MCF 10A (cell line): ENCODE measurements at regions of chr9 and their contacts with region 1.

Region 1: DNA sequence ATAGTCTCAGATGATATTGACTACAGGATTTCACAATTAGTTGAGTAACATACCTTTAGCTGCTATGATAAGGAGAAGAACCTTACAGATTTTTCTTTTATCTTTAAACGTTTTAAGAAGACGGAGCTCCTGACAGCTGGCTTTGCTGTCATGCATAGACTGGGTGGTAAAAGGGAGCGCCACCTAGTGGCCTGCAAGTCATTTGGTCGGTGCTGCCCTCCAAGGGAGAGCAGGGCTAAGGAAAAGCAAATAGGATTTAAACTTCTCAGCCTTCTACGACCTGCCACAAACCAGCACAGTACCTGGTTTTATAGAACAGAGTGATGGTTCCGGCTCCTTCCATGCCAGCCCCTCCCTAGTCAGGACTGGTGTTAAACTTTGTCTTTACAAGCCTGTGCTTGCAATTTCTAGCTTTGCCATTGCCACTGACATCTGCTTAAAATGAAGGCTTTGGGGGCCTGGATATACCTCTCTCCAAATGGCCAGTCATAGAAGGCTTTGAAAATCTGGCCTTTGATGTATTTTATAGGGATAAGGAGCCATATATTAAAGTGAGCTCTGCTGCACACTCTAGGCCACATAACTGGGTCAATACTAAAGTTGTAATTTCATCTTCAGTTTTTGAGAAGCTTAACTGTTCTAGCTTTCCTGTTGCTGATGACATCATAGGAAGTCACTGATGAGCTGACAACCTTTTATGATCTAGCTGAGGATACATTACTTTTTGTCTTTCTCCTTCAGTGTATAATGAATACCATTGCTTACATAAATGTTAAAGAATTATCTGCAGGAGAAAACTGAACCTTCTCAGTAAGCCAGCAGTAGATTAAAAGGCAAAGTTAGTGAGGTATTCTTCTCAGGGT is 31.1 kb upstream of the ADAMTSL1 start:
- DNase-seq: peak; percentile 80
- H3K4me3 Mint-ChIP-seq: no peak overlapping the region
- H3K27ac Mint-ChIP-seq: no peak overlapping the region
- H3K4me1 Mint-ChIP-seq: peaks cover 7% of the 10 kb centered on the region
- H3K27me3 Mint-ChIP-seq: no peaks in the 10 kb centered on the region
- CTCF ChIP-seq: peak; percentile 72

Region 2: GRCh38 chr9:18154661-18155060 is 288.2 kb before region 1 on chr9:
- CTCF ChIA-PET with region 1: no interaction called
- POLR2A ChIA-PET with region 1: no interaction called
- intact Hi-C with region 1: no loop called
- DNase-seq: no peak
- H3K4me3 Mint-ChIP-seq: no peak overlapping the region
- H3K27ac Mint-ChIP-seq: no peak overlapping the region
- H3K4me1 Mint-ChIP-seq: no peaks in the 10 kb centered on the region
- H3K27me3 Mint-ChIP-seq: peaks cover 65% of the 10 kb centered on the region
- CTCF ChIP-seq: no peak

Region 3: GRCh38 chr9:18260521-18260920 is 182.3 kb before region 1 on chr9:
- CTCF ChIA-PET with region 1: interaction called, 126 read pairs
- POLR2A ChIA-PET with region 1: interaction called, 4 read pairs
- intact Hi-C with region 1: loop called (anchors 1 kb)
- DNase-seq: peak; percentile 53
- H3K4me3 Mint-ChIP-seq: no peak overlapping the region
- H3K27ac Mint-ChIP-seq: no peak overlapping the region
- H3K4me1 Mint-ChIP-seq: peaks cover 20% of the 10 kb centered on the region
- H3K27me3 Mint-ChIP-seq: no peaks in the 10 kb centered on the region
- CTCF ChIP-seq: no peak

Region 4: DNA sequence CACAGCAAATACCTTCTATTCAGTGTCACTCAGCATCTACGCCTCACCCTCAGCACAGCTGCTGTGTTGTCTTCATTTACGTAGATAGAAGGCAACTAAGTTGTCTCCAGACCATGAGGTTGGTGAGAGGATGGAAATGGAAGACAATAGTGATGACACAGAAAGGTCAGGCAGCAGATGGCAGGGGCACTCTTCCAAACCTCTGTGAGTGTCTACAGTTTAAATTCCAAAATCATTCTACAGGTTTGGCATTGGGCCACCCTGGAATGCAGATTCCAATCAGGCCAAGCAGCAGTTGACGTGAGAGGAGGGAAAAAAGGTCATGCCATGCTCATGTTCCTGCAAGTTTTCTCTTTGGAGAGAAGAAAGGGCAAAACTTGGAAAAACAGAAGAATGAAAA is 37.6 kb before region 1 on chr9:
- CTCF ChIA-PET with region 1: interaction called, 12 read pairs
- POLR2A ChIA-PET with region 1: no interaction called
- intact Hi-C with region 1: no loop called
- DNase-seq: peak; percentile 61
- H3K4me3 Mint-ChIP-seq: no peak overlapping the region
- H3K27ac Mint-ChIP-seq: no peak overlapping the region
- H3K4me1 Mint-ChIP-seq: peaks cover 15% of the 10 kb centered on the region
- H3K27me3 Mint-ChIP-seq: no peaks in the 10 kb centered on the region
- CTCF ChIP-seq: peak; percentile 13

Region 5: DNA sequence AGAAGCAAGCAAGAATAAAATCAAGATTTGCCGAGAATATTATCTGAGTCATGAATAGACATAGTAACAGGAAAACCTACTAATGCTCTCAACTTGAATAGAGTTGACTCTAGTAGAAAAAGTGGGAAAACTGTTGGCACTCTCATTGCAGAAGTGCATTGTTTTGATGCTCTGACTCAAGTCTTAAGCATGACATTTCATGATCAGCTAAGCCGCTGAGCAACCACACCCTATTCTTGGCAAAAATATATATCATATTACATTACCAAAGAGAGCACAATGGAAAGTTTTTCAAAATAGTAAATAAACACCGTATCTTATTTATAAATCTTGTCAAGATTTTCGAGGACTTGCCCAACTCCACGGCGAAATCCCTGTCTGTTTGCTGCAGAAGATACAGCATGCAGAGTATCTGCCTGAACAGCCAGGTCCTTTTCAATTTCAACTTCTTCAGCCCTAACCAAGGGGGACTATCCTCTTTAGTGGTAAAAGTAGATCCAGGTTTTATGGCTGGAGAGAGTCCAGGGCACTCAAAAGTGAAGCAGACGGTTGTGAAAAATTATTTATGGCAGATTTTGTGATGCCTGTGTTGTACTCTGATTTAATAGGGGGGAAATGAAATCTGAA is 17.2 kb after region 1 on chr9:
- CTCF ChIA-PET with region 1: interaction called, 18 read pairs
- POLR2A ChIA-PET with region 1: interaction called, 10 read pairs
- intact Hi-C with region 1: no loop called
- DNase-seq: peak; percentile 94
- H3K4me3 Mint-ChIP-seq: peak overlapping the region; percentile 13
- H3K27ac Mint-ChIP-seq: peak overlapping the region; percentile 84
- H3K4me1 Mint-ChIP-seq: peaks cover 31% of the 10 kb centered on the region
- H3K27me3 Mint-ChIP-seq: no peaks in the 10 kb centered on the region
- CTCF ChIP-seq: no peak

Region 6: GRCh38 chr9:18480662-18481093 is 37.8 kb after region 1 on chr9:
- CTCF ChIA-PET with region 1: no interaction called
- POLR2A ChIA-PET with region 1: no interaction called
- intact Hi-C with region 1: no loop called
- DNase-seq: no peak
- H3K4me3 Mint-ChIP-seq: no peak overlapping the region
- H3K27ac Mint-ChIP-seq: no peak overlapping the region
- H3K4me1 Mint-ChIP-seq: no peaks in the 10 kb centered on the region
- H3K27me3 Mint-ChIP-seq: no peaks in the 10 kb centered on the region
- CTCF ChIP-seq: no peak

Region 7: DNA sequence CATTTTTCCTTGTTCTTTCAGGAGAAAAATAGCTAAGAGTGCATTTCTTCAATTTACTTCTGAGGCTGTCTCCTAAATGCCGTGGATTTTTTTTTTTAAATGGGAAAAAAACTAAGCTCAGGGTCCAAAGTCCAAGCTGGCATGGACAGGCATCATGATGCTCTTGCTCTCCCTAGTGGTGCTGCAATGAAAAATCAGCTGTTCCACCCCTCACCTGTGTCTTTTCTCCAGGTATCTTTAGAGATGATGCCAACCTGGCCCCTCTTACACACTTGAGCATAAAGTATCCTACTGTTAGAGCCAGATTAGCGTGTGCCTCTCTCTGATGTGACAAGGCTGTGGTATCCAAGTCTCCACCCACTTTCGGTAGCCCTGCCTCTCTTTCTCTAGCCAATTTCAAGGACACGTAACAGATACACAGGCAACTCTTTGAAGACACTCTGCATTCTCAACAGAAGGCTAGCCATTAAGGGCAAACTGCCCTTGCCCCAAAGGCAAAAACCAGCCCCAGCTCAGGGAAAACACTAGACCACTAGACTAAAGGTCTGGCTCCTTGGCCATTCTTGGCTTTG is 381.3 kb after region 1 on chr9:
- CTCF ChIA-PET with region 1: interaction called, 11 read pairs
- POLR2A ChIA-PET with region 1: no interaction called
- intact Hi-C with region 1: no loop called
- DNase-seq: peak; percentile 45
- H3K4me3 Mint-ChIP-seq: no peak overlapping the region
- H3K27ac Mint-ChIP-seq: no peak overlapping the region
- H3K4me1 Mint-ChIP-seq: no peaks in the 10 kb centered on the region
- H3K27me3 Mint-ChIP-seq: no peaks in the 10 kb centered on the region
- CTCF ChIP-seq: peak; percentile 47